Activated T-helper 1 cell treated with anti-CD3 and anti-CD28 coated beads, Interleukin-12 subunit alpha, Interleukin-12 subunit beta, Interleukin-2, Interleukin-4 antibody, amounts not matched to agents 30 ng/mL and 10 ng/mL and 1 ng/mL, durations not matched to agents 14 hours and 24 hours and 36 hours (primary cell): ENCODE measurements at regions of chr2 and their contacts with region 1.

Region 1: GRCh38 chr2:231642631-231643494 is 50.2 kb downstream of the TEX44 start:
- DNase-seq: peak; percentile 76
- H3K4me3 Mint-ChIP-seq: peak overlapping the region; percentile 74
- H3K27ac Mint-ChIP-seq: peak overlapping the region; percentile 95
- H3K4me1 Mint-ChIP-seq: peaks cover 37% of the 10 kb centered on the region
- H3K27me3 Mint-ChIP-seq: no peaks in the 10 kb centered on the region

Region 2: DNA sequence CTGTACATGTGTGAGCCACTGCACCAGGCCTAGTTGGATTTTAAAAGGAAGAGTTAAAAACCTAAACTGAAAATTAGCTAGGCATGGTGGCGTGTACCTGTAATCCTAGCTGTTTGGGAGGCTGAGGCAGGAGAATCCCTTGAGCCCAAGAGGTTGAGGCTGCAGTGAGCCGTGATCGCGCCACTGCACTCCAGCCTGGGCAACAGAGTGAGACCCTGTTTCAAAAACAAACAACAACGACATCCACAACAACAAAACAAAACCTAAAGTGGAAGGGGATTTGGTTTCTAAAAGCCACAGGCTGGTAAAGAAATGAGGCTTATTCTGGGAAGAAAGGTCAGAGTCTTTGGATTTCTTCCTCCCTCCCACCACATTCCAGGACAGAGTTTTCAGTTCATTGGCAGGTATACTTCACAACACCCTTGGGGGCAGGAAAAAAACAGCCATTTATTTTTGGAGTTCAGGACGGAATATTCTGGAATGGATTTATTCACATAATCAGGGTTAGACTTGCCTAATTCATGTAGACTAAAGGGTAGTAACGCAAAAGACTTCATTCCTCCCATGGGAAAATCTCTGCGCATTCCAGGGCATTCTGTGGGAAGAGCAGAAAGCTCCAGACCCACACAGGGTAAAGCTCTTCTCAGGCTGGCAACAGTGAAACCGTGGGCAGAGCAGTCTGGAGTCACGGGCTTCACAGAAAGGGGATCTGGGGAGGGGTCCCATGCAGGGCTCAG is 15.3 kb before region 1 on chr2:
- intact Hi-C with region 1: loop called (anchors 2 kb)
- DNase-seq: no peak
- H3K4me3 Mint-ChIP-seq: peak overlapping the region; percentile 59
- H3K27ac Mint-ChIP-seq: peak overlapping the region; percentile 93
- H3K4me1 Mint-ChIP-seq: peaks cover 23% of the 10 kb centered on the region
- H3K27me3 Mint-ChIP-seq: no peaks in the 10 kb centered on the region

Region 3: DNA sequence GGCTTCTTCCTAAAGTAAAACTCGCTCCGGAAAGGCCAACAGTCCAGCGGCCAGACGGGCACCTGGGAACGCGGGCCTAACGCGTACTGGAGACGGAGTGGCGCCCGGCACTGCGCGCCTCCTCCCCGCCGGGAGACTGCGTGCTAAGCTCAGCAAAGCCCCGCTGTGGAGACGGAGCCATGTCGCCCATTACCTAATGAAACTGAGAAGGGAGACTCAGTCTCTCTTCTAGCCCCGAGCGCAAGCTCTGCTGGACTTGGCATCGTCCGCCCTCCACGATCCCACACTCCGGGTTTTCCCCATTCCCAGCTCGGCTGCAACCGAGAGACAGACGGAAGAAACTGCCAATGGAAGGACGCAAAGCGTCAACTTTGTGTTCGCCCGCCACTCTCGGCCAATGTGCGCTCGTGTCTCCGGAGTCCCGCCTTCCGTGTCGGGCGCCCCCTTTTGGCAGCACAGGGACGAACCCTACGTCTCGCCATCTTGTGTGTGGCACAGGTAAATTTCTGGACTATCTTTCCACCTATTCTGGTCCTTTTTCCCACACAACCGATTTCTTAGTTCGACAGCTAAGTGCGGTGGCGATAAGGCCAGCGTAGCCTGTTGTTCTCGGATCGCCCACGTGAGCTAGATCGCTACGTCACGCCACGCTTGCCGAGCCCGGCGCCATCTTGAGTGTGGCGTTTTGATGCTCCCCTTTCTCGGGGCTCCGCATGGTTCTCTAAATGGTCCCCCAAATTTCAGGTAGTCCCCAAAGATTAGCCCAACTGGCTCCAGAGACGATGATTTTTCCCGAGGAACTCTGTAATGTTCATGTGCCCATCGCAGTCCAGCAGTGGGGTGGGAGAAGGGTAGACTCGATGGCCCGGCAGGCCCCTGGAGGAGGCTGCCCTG is 64.1 kb after region 1 on chr2:
- intact Hi-C with region 1: loop called (anchors 1 kb)
- DNase-seq: peak; percentile 96
- H3K4me3 Mint-ChIP-seq: peak overlapping the region; percentile 99
- H3K27ac Mint-ChIP-seq: peak overlapping the region; percentile 100
- H3K4me1 Mint-ChIP-seq: peaks cover 13% of the 10 kb centered on the region
- H3K27me3 Mint-ChIP-seq: peaks cover 3% of the 10 kb centered on the region